Heart left ventricle (tissue), 16 donors: ENCODE measurements at regions of chr16 and their contacts with region 1.

Region 1: DNA sequence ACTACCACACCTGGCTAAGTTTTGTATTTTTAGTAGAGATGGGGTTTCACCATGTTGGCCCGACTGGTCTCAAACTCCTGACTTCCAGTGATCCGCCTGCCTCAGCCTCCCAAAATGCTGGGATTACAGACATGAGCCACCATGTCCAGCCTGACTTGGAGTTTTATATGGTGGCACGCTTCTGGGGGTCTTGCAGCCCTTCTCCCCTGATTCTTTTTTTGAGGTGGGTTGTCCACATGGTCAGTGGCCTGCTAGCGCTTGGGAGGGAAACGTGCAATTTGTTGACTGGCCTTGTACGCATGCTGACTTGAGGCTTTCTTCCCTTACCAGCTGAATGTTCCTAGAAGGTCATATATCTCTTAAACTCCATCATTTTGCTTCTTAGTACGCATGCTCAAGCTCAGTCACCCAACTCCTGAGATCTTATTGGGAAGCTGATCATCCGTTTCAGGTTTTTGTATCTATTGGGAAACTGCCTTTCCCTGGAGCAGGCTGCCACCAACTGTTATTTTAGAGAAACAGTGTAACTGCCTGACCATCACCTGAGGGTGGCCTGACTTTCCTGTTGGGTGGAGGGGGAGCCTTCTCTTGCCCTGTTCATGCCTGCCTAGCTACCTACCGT is 13.7 kb upstream of the LDHD start:
- DNase-seq: no peak
- ATAC-seq: peak in 1 of 4 donors; percentile 56
- H3K4me3 ChIP-seq: no peak overlapping the region
- H3K27ac ChIP-seq: no peak overlapping the region
- H3K4me1 ChIP-seq: no peaks in the 10 kb centered on the region
- H3K27me3 ChIP-seq: no peaks in the 10 kb centered on the region
- CTCF ChIP-seq: peak in 8 of 12 donors; percentile 16 to 51 (median 26)
- POLR2A ChIP-seq: no peak

Region 2: GRCh38 chr16:74485941-74486340 is 644.3 kb before region 1 on chr16:
- intact Hi-C with region 1: no loop called
- DNase-seq: no peak
- ATAC-seq: no peak
- H3K4me3 ChIP-seq: no peak overlapping the region
- H3K27ac ChIP-seq: no peak overlapping the region
- H3K4me1 ChIP-seq: peaks cover 0 to 2% (median 0%) of the 10 kb centered on the region in 12 donors
- H3K27me3 ChIP-seq: no peaks in the 10 kb centered on the region
- CTCF ChIP-seq: no peak
- POLR2A ChIP-seq: no peak

Region 3: DNA sequence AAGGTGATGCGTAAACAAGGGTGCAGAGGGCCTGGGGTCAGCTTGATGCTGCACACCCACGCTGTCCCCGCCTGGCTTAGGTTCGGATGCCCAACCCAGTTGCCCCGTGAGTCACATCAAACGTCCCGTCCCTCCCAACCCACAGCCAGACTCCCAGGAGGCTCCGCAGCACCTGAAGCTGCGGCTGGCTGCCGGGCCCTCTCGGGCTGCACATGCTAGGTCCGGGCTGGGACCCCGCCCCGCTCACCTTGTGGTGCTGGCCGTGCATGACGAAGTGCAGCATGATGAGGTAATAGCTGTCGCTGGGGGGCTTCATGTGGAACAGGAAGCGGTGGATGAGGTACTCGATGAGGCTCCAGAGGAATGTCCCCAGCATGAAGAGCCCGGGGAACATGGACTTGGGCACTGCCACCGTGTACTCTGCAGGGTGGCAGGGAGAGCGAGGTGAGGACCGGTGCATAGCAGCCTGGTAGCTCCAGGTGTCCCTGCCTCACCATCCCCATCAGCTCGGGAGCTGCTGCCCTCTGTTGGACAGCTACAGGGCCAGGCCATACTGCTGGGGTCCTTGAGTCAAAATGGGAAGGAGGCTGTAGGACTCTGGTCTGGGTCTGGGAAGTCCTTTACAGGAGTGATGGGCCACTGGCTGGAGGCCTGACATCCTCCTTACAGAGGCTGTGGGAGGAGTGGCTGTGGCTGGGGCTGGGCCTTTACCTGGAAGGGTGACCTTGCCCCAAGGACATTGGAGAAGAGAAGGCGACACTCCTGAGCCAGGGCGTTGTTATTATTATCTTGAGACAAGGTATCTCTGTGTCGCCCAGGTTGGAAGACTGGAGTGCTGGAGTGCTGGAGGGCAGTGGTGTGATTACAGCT is 411.3 kb before region 1 on chr16:
- intact Hi-C with region 1: loop called in 1 of 10 experiments (anchors 10 kb)
- DNase-seq: no peak
- ATAC-seq: no peak
- H3K4me3 ChIP-seq: no peak overlapping the region
- H3K27ac ChIP-seq: no peak overlapping the region
- H3K4me1 ChIP-seq: no peaks in the 10 kb centered on the region
- H3K27me3 ChIP-seq: no peaks in the 10 kb centered on the region
- CTCF ChIP-seq: no peak
- POLR2A ChIP-seq: no peak